Aorta (tissue), 5 donors: ENCODE measurements at regions of chr6 and their contacts with region 1.

Region 1: GRCh38 chr6:30828027-30828960 is 56.0 kb upstream of the DDR1 start:
- DNase-seq: peak; percentile 94
- ATAC-seq: peak; percentile 96
- H3K4me3 ChIP-seq: no peak overlapping the region
- H3K27ac ChIP-seq: no peak overlapping the region
- H3K4me1 ChIP-seq: no peaks in the 10 kb centered on the region
- H3K27me3 ChIP-seq: no peaks in the 10 kb centered on the region

Region 2: GRCh38 chr6:30113003-30113759 is 715.1 kb before region 1 on chr6 and contains the start of gene TRIM31:
- intact Hi-C with region 1: no loop called
- DNase-seq: no peak
- ATAC-seq: no peak
- H3K4me3 ChIP-seq: no peak within 1 kb of the TSS
- H3K27ac ChIP-seq: no peak within 1 kb of the TSS
- H3K4me1 ChIP-seq: no peaks in the 10 kb centered on the region
- H3K27me3 ChIP-seq: no peaks in the 10 kb centered on the region
- total RNA-seq, gene TRIM31: not detected

Region 3: DNA sequence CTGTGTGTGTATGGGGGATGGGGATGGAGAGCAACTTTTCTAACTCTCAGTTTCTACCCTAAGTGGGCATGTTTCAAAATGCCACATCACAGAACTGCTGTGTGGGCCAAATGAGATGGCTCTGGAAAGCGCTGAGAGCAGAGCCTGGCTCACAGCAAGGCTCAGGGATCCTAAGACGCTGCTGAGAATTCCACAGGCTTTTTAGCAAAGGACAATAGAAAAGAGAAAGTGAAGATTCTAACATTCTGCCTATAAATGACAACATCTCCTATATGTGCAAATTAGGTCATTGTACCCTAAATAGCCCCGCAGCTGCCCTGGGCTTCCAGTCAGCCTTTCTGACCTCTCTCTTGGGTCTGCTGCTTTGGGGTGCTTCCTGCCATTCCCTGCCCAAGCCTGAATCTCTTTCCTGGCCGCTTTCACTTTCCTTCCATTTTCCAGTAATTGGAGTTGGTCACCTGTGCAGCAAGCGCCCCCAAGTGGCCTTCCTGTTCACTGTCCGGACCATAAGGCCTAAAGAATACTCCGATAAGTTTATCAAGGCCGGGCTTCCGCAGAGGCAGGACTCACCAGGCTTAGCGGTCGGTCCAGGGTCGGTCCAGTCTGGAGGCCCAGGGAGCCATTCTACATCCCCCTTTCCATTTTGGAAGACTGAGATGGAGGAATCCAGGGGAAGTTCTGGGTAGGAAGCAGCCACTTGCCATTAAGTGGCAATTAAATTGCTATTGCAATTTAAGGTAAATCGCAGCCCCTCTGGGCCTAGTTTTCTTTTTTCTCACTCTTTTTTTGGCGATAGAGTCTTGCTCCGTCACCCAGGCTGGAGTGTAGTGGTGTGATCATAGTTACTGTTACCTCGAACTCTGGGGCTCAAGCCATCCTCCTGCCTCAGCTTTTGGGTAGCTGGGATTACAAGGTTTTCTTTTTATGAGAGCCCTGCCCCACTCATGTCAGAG is 49.4 kb after region 1 on chr6:
- intact Hi-C with region 1: loop called (anchors 1 to 2 kb)
- DNase-seq: peak; percentile 93 to 95
- ATAC-seq: peak; percentile 92
- H3K4me3 ChIP-seq: peak overlapping the region in 1 of 2 donors; percentile 31
- H3K27ac ChIP-seq: peak overlapping the region; percentile 39 to 88
- H3K4me1 ChIP-seq: no peaks in the 10 kb centered on the region
- H3K27me3 ChIP-seq: no peaks in the 10 kb centered on the region

Region 4: DNA sequence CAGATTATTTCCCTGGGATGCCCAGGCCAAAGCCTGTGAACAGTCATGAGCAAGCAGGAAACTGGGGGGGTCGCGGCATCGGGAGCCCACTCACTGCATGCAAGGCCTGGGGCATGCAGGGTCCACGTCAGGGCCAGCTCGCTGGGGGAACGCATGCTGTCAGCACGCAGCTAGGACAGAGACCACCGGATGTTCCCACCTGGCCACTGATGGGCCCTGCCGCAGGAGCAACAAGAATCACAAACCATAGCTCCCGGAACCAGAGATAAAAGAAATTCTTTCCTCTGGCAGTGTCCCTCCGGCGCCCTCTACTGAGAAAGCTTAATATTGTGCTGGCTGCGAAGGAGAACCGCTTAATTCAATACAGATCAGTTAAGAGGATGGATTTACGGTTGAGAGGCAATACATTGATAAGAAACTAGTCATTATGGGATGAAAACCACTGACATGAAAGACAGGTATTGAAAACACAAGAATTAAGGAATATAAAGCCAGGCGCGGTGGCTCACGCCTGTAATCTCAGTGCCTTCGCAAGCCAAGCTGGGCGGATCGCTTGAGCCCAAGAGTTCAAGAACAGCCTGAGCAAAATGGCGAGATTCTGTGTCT is 251.5 kb after region 1 on chr6:
- intact Hi-C with region 1: loop called in 1 of 2 experiments (anchors 5 kb)
- DNase-seq: peak in 1 of 2 donors; percentile 65
- ATAC-seq: peak; percentile 75
- H3K4me3 ChIP-seq: no peak overlapping the region
- H3K27ac ChIP-seq: no peak overlapping the region
- H3K4me1 ChIP-seq: no peaks in the 10 kb centered on the region
- H3K27me3 ChIP-seq: no peaks in the 10 kb centered on the region

Region 5: GRCh38 chr6:31087494-31088089 is 259.3 kb after region 1 on chr6:
- intact Hi-C with region 1: loop called in 1 of 2 experiments (anchors 5 kb)
- DNase-seq: peak; percentile 91 to 95
- ATAC-seq: peak; percentile 92
- H3K4me3 ChIP-seq: no peak overlapping the region
- H3K27ac ChIP-seq: no peak overlapping the region
- H3K4me1 ChIP-seq: no peaks in the 10 kb centered on the region
- H3K27me3 ChIP-seq: no peaks in the 10 kb centered on the region

Region 6: DNA sequence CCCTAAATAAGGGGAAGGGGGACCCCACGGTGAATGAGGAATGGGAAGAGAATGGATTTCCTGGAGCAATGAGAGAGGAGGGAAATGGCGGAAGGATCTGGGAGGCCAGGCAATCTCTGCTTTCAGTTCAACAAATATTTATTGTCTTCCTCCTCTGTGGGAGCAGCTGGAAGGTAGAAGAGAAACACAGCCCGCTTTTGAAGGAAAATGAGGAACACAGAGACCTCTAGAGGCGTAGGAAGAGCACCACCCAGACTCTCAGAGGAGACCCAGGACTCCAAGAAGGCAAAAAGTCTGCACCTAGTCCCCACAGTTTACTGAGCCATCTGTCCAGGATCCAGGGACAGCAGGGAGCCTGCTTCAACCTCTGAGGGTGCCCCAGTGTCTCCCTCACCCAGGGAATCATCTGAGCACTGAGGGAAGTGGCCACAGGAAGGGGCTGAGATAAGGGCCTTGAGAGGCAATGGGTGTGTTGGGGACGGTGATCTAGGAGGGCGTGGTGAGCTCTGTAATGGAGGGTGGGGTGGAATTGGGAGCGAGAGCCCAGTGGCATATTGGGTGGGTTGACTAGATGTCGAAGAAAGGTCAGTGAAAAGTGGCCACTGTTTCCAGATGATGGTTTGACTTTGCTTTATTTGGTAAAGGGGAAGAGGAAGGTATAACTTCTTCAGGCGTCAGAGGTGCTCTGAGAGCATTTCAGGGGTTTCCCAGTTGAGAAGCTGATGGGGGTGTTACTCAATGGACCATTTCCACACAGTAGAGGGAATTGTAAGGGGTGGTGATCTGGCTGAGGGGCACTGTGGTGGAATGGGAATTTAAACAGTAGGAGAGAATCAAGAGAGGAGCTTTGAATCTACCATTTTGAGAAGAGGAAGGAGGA is 286.9 kb after region 1 on chr6:
- intact Hi-C with region 1: no loop called
- DNase-seq: peak; percentile 22 to 37
- ATAC-seq: no peak
- H3K4me3 ChIP-seq: no peak overlapping the region
- H3K27ac ChIP-seq: no peak overlapping the region
- H3K4me1 ChIP-seq: peaks cover 0 to 7% of the 10 kb centered on the region in 2 donors
- H3K27me3 ChIP-seq: no peaks in the 10 kb centered on the region